CD4-positive, alpha-beta T cell (primary cell): ENCODE measurements at regions of chr20 and their contacts with region 1.

Region 1: GRCh38 chr20:1671891-1672669 is 14.5 kb upstream of the SIRPG start:
- DNase-seq: peak in 2 of 14 experiments; percentile 46 to 68
- ATAC-seq: peak; percentile 46
- H3K4me3 ChIP-seq: no peak overlapping the region
- H3K4me3 Mint-ChIP-seq: peak overlapping the region; percentile 69
- H3K27ac ChIP-seq: peak overlapping the region; percentile 29 to 67
- H3K27ac Mint-ChIP-seq: peak overlapping the region; percentile 95
- H3K4me1 ChIP-seq: peaks cover 82% of the 10 kb centered on the region
- H3K4me1 Mint-ChIP-seq: peaks cover 98% of the 10 kb centered on the region
- H3K27me3 ChIP-seq: no peaks in the 10 kb centered on the region
- H3K27me3 Mint-ChIP-seq: no peaks in the 10 kb centered on the region
- CTCF ChIP-seq: no peak

Region 2: DNA sequence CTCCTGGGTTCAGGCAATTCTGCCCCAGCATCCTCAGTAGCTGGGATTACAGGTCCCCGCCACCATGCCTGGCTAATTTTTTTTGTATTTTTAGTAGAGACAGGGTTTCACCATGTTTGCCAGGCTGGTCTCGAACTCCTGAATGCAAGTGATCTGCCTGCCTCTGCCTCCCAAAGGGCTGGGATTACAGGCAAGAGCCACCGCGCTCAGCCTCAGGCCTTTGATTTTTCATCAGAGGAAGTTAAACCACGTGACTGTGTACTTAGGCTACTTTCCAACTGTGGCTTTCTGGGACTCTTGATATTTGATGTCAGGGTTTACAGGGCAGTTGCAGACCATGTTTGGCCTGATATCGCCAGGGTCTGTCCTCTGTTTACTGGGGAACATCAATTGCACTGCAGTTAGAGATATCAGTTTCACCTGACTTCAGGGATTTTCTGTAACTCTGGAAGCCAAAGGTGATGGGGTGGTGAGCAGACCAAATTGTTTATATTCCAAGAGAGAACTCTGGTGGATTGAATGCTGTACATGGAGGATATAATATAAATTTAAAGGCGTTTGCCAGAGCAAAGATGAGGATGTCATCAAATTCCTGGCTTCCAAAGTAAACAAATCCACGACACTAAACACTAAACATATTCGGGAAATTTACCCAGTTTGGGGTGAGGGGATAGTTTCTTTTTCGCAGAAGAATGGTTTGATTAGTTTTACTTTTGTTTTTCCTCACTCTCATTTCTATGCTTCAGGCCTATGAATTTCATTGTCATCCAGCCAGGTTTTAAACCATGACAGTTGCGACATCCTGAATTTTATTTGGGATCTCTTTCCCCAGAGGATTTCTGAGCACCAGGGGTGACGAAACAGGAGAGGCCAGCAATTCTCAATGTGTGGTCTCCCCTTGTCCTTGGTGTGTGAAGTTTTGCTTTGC is 549.4 kb before region 1 on chr20:
- CTCF ChIA-PET with region 1: no interaction called
- POLR2A ChIA-PET with region 1: no interaction called
- intact Hi-C with region 1: no loop called
- DNase-seq: peak in 5 of 14 experiments; percentile 4 to 34 (median 23)
- ATAC-seq: no peak
- H3K4me3 ChIP-seq: no peak overlapping the region
- H3K4me3 Mint-ChIP-seq: peak overlapping the region; percentile 72
- H3K27ac ChIP-seq: no peak overlapping the region
- H3K27ac Mint-ChIP-seq: peak overlapping the region; percentile 57
- H3K4me1 ChIP-seq: peaks cover 53% of the 10 kb centered on the region
- H3K4me1 Mint-ChIP-seq: peaks cover 79% of the 10 kb centered on the region
- H3K27me3 ChIP-seq: no peaks in the 10 kb centered on the region
- H3K27me3 Mint-ChIP-seq: no peaks in the 10 kb centered on the region
- CTCF ChIP-seq: no peak

Region 3: DNA sequence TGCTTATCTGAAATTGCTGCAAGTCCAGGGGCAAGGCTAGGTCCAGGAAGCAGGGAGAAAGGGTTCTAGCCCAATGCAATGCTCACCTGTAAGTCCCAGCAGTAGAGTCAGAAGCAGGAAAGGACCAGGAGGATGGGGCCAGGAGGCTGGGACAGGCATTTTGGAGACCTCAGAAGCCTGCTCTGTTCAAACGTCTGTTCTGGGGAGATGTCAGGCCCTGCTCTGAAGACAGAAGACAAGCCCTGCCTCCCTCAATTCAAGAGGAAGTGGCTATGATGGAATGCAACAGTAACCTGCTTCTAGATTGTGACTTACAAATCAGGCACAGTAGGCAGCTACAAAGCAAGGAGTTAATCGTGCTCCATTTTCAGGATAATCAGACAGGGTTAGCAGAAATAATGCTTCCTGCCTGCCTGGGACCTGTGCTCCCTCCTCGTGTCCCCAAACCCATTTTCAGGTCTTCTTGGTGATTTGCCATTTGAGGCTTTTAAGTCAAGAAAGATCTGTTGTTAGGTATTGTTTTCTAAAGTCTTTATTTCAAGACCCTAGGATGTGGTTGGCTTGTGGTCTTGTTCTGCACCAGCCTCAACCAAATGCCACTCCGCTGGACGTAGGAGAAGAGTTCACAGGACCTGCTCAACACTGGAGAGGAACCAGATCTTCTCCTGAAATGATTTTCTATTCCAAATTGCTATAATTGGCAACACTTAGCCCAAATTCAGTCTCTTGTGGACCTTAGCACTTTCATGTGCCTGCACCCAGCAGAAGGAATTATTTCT is 14.3 kb before region 1 on chr20 and contains the start of gene SIRPG:
- CTCF ChIA-PET with region 1: interaction called, 3 read pairs
- POLR2A ChIA-PET with region 1: interaction called, 6 read pairs
- intact Hi-C with region 1: loop called in 1 of 2 experiments (anchors 2 kb)
- DNase-seq: peak in 7 of 14 experiments; percentile 20 to 72 (median 55)
- ATAC-seq: peak; percentile 68
- H3K4me3 ChIP-seq: peak within 1 kb of the TSS; percentile 69
- H3K4me3 Mint-ChIP-seq: peak within 1 kb of the TSS; percentile 94
- H3K27ac ChIP-seq: peak within 1 kb of the TSS; percentile 76 to 77
- H3K27ac Mint-ChIP-seq: peak within 1 kb of the TSS; percentile 95
- H3K4me1 ChIP-seq: peaks cover 65% of the 10 kb centered on the region
- H3K4me1 Mint-ChIP-seq: peaks cover 93% of the 10 kb centered on the region
- H3K27me3 ChIP-seq: no peaks in the 10 kb centered on the region
- H3K27me3 Mint-ChIP-seq: no peaks in the 10 kb centered on the region
- CTCF ChIP-seq: no peak
- total RNA-seq, gene SIRPG: 28.0 to 28.3 TPM

Region 4: DNA sequence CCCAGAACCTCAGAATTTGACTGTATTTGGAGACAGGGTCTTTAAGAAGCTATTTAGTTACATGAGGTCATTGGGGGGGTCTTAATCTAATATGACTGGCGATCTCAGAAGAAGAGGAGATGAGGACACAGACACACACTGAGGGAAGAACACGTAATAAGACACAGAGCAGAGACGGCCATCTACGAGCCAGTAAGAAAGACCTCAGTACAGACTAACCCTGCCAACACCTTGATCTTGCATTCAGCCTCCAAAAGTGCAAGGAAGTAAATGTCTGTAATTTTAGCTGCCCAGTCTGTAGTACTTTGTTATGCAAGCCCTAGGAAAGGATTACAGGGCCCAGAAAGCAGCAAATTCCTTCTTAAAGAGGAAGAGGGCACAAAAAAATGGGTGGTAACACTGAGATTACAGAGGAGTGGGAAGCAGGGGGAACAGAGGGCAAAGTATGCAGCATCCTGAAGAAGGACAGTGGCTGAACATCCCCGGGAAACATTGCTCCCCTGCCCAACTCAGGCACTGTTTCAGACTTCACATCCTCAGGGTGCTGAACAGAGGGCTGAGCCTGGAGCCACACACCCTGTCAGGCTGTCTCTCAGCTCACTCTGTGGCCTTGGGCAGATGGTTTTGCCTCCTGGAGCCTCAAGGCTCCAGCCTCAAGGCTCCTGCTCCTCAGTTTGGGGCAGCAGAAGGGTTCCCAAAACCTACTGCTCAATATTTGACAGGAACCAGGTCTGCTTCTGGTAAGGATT is 13.4 kb after region 1 on chr20:
- CTCF ChIA-PET with region 1: no interaction called
- POLR2A ChIA-PET with region 1: interaction called, 21 read pairs
- intact Hi-C with region 1: no loop called
- DNase-seq: peak in 1 of 14 experiments; percentile 37
- ATAC-seq: peak; percentile 43
- H3K4me3 ChIP-seq: peak overlapping the region; percentile 49
- H3K4me3 Mint-ChIP-seq: peak overlapping the region; percentile 88
- H3K27ac ChIP-seq: peak overlapping the region; percentile 64 to 66
- H3K27ac Mint-ChIP-seq: peak overlapping the region; percentile 86
- H3K4me1 ChIP-seq: peaks cover 31% of the 10 kb centered on the region
- H3K4me1 Mint-ChIP-seq: peaks cover 90% of the 10 kb centered on the region
- H3K27me3 ChIP-seq: no peaks in the 10 kb centered on the region
- H3K27me3 Mint-ChIP-seq: no peaks in the 10 kb centered on the region
- CTCF ChIP-seq: no peak

Region 5: DNA sequence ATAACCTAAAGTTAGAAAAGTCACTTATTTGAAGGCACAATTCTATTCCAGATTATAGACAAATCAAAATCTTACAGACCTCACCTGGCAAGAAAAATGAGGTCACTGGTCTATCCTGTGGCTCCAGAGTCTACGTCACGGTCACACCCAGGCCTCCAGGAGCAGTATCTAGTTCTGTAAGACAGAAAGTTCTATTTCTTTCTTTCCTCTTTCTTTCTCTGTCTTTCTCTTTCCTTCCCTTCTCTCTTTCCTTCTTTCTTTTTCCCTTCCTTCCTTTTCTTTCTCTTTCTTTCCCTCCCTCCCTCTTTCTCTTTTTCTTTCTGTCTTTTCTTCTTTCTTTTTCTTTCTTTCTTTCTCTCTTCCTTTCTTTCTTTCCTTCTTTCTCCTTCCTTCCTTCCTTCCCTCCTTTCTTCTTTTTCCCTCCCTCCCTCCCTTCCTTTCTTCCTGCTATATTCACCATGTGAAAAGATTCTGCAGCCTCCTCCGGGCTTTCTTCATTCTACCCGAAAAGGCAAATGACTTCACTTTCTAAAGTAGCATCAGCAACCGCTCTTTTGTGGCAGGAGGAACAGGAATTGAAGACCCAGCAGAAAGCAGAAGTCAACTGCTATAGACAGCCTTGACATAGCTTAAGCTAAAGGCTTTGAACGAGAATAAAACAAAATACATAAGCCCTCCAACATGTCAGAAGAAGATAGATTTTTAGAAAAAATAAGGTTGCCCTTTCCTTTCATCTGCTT is 69.4 kb after region 1 on chr20:
- CTCF ChIA-PET with region 1: no interaction called
- POLR2A ChIA-PET with region 1: no interaction called
- intact Hi-C with region 1: no loop called
- DNase-seq: no peak
- ATAC-seq: no peak
- H3K4me3 ChIP-seq: no peak overlapping the region
- H3K4me3 Mint-ChIP-seq: no peak overlapping the region
- H3K27ac ChIP-seq: no peak overlapping the region
- H3K27ac Mint-ChIP-seq: no peak overlapping the region
- H3K4me1 ChIP-seq: no peaks in the 10 kb centered on the region
- H3K4me1 Mint-ChIP-seq: peaks cover 7% of the 10 kb centered on the region
- H3K27me3 ChIP-seq: peaks cover 3% of the 10 kb centered on the region in 2 experiments
- H3K27me3 Mint-ChIP-seq: peaks cover 15% of the 10 kb centered on the region
- CTCF ChIP-seq: no peak